Naive thymus-derived CD4-positive, alpha-beta T cell (primary cell): ENCODE measurements at regions of chr17 and their contacts with region 1.

Region 1: GRCh38 chr17:59753522-59754467 is 46.3 kb downstream of the VMP1 start:
- DNase-seq: peak in 7 of 9 donors; percentile 48 to 79 (median 71)
- ATAC-seq: peak; percentile 98
- H3K4me3 ChIP-seq: peak overlapping the region; percentile 15
- H3K4me3 Mint-ChIP-seq: peak overlapping the region in 9 of 10 donors; percentile 16 to 75 (median 53)
- H3K27ac ChIP-seq: peak overlapping the region; percentile 47
- H3K27ac Mint-ChIP-seq: peak overlapping the region; percentile 36 to 94 (median 76)
- H3K4me1 ChIP-seq: peaks cover 0 to 5% of the 10 kb centered on the region in 2 donors
- H3K4me1 Mint-ChIP-seq: peaks cover 9 to 63% (median 24%) of the 10 kb centered on the region in 7 donors
- H3K27me3 ChIP-seq: no peaks in the 10 kb centered on the region
- H3K27me3 Mint-ChIP-seq: no peaks in the 10 kb centered on the region

Region 2: GRCh38 chr17:59837308-59838051 is 83.7 kb after region 1 on chr17:
- CTCF ChIA-PET with region 1: interaction called, 10 read pairs
- POLR2A ChIA-PET with region 1: interaction called, 3 read pairs
- intact Hi-C with region 1: loop called (anchors 1 kb)
- DNase-seq: peak in 8 of 9 donors; percentile 51 to 91 (median 74)
- ATAC-seq: peak; percentile 94
- H3K4me3 ChIP-seq: peak overlapping the region; percentile 72
- H3K4me3 Mint-ChIP-seq: peak overlapping the region; percentile 83 to 100 (median 95)
- H3K27ac ChIP-seq: peak overlapping the region; percentile 88
- H3K27ac Mint-ChIP-seq: peak overlapping the region; percentile 90 to 99 (median 96)
- H3K4me1 ChIP-seq: peaks cover 6 to 14% of the 10 kb centered on the region in 2 donors
- H3K4me1 Mint-ChIP-seq: peaks cover 14 to 69% (median 49%) of the 10 kb centered on the region in 7 donors
- H3K27me3 ChIP-seq: no peaks in the 10 kb centered on the region
- H3K27me3 Mint-ChIP-seq: peaks cover 0 to 17% (median 0%) of the 10 kb centered on the region in 5 donors

Region 3: DNA sequence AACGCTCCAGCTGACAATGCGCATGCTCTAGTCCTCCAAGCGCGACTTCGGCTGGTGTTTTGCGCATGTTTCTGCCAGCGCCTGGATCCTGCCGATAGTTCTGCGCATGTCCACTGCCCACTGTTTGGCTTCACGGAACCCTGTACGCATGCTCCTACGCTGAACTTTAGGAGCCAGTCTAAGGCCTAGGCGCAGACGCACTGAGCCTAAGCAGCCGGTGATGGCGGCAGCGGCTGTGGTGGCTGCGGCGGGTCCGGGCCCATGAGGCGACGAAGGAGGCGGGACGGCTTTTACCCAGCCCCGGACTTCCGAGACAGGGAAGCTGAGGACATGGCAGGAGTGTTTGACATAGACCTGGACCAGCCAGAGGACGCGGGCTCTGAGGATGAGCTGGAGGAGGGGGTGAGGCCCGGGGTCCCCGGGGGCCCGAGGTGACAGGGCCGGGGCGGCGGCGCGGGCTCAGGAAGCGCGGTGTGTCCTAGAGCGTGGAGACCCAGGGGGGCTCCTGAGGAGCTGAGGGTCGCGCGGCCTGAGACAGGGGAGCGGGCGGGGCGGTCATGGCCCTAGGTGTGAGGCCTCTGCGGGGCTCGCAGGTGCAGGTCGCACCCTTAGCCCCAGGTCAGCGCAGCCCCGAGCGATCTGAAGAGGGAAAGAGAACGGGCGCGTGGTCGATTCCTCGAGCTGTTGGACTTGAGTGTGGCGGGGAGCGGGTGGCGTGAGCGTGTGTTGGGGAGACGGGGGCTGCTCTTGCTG is 139.3 kb after region 1 on chr17 and contains the starts of genes RPS6KB1 and TUBD1:
- CTCF ChIA-PET with region 1: interaction called, 3 read pairs
- POLR2A ChIA-PET with region 1: interaction called, 4 read pairs
- intact Hi-C with region 1: loop called in 1 of 2 experiments (anchors 1 kb)
- DNase-seq: peak; percentile 87 to 99 (median 98)
- ATAC-seq: peak; percentile 96
- H3K4me3 ChIP-seq: peak within 1 kb of the TSS; percentile 74
- H3K4me3 Mint-ChIP-seq: peak within 1 kb of the TSS; percentile 97 to 100 (median 99)
- H3K27ac ChIP-seq: peak within 1 kb of the TSS; percentile 93
- H3K27ac Mint-ChIP-seq: peak within 1 kb of the TSS; percentile 98 to 100 (median 100)
- H3K4me1 ChIP-seq: peaks cover 13 to 23% of the 10 kb centered on the region in 2 donors
- H3K4me1 Mint-ChIP-seq: peaks cover 43 to 83% (median 67%) of the 10 kb centered on the region in 7 donors
- H3K27me3 ChIP-seq: no peaks in the 10 kb centered on the region
- H3K27me3 Mint-ChIP-seq: peaks cover 0 to 4% (median 0%) of the 10 kb centered on the region in 5 donors
- total RNA-seq, gene RPS6KB1: 62.0 to 107 (median 71.5) TPM
- total RNA-seq, gene TUBD1: 8.2 to 42.1 (median 14.3) TPM

Region 4: GRCh38 chr17:59950049-59950448 is 196.3 kb after region 1 on chr17:
- CTCF ChIA-PET with region 1: no interaction called
- POLR2A ChIA-PET with region 1: no interaction called
- intact Hi-C with region 1: no loop called
- DNase-seq: no peak
- ATAC-seq: no peak
- H3K4me3 ChIP-seq: no peak overlapping the region
- H3K4me3 Mint-ChIP-seq: no peak overlapping the region
- H3K27ac ChIP-seq: no peak overlapping the region
- H3K27ac Mint-ChIP-seq: peak overlapping the region in 3 of 9 donors; percentile 19 to 41 (median 36)
- H3K4me1 ChIP-seq: no peaks in the 10 kb centered on the region
- H3K4me1 Mint-ChIP-seq: peaks cover 0 to 19% (median 4%) of the 10 kb centered on the region in 7 donors
- H3K27me3 ChIP-seq: no peaks in the 10 kb centered on the region
- H3K27me3 Mint-ChIP-seq: no peaks in the 10 kb centered on the region

Region 5: GRCh38 chr17:60036796-60037612 is 283.2 kb after region 1 on chr17:
- CTCF ChIA-PET with region 1: interaction called, 4 read pairs
- POLR2A ChIA-PET with region 1: no interaction called
- intact Hi-C with region 1: loop called (anchors 5 kb)
- DNase-seq: peak; percentile 45 to 71 (median 65)
- ATAC-seq: peak; percentile 96
- H3K4me3 ChIP-seq: no peak overlapping the region
- H3K4me3 Mint-ChIP-seq: peak overlapping the region in 1 of 10 donors; percentile 5
- H3K27ac ChIP-seq: no peak overlapping the region
- H3K27ac Mint-ChIP-seq: no peak overlapping the region
- H3K4me1 ChIP-seq: peaks cover 0 to 4% of the 10 kb centered on the region in 2 donors
- H3K4me1 Mint-ChIP-seq: peaks cover 0 to 8% (median 5%) of the 10 kb centered on the region in 7 donors
- H3K27me3 ChIP-seq: no peaks in the 10 kb centered on the region
- H3K27me3 Mint-ChIP-seq: peaks cover 16 to 24% (median 19%) of the 10 kb centered on the region in 5 donors